Naive thymus-derived CD4-positive, alpha-beta T cell (primary cell): ENCODE measurements at regions of chr7 and their contacts with region 1.

Region 1: GRCh38 chr7:37385787-37386186 is 62.9 kb downstream of the ELMO1 start:
- DNase-seq: no peak
- ATAC-seq: peak; percentile 42
- H3K4me3 ChIP-seq: no peak overlapping the region
- H3K4me3 Mint-ChIP-seq: no peak overlapping the region
- H3K27ac ChIP-seq: no peak overlapping the region
- H3K27ac Mint-ChIP-seq: peak overlapping the region in 3 of 9 donors; percentile 5 to 77 (median 51)
- H3K4me1 ChIP-seq: no peaks in the 10 kb centered on the region
- H3K4me1 Mint-ChIP-seq: peaks cover 23 to 63% (median 35%) of the 10 kb centered on the region in 7 donors
- H3K27me3 ChIP-seq: no peaks in the 10 kb centered on the region
- H3K27me3 Mint-ChIP-seq: no peaks in the 10 kb centered on the region

Region 2: GRCh38 chr7:37369906-37370305 is 15.9 kb before region 1 on chr7:
- CTCF ChIA-PET with region 1: interaction called, 3 read pairs
- POLR2A ChIA-PET with region 1: no interaction called
- intact Hi-C with region 1: loop called in 1 of 2 experiments (anchors 2 kb)
- DNase-seq: no peak
- ATAC-seq: no peak
- H3K4me3 ChIP-seq: no peak overlapping the region
- H3K4me3 Mint-ChIP-seq: no peak overlapping the region
- H3K27ac ChIP-seq: no peak overlapping the region
- H3K27ac Mint-ChIP-seq: peak overlapping the region in 2 of 9 donors; percentile 13 to 59
- H3K4me1 ChIP-seq: peaks cover 12 to 17% of the 10 kb centered on the region in 2 donors
- H3K4me1 Mint-ChIP-seq: peaks cover 27 to 70% (median 51%) of the 10 kb centered on the region in 7 donors
- H3K27me3 ChIP-seq: no peaks in the 10 kb centered on the region
- H3K27me3 Mint-ChIP-seq: no peaks in the 10 kb centered on the region

Region 3: GRCh38 chr7:37399876-37400421 is 14.2 kb after region 1 on chr7:
- CTCF ChIA-PET with region 1: no interaction called
- POLR2A ChIA-PET with region 1: no interaction called
- intact Hi-C with region 1: loop called in 1 of 2 experiments (anchors 2 kb)
- DNase-seq: no peak
- ATAC-seq: no peak
- H3K4me3 ChIP-seq: no peak overlapping the region
- H3K4me3 Mint-ChIP-seq: no peak overlapping the region
- H3K27ac ChIP-seq: no peak overlapping the region
- H3K27ac Mint-ChIP-seq: peak overlapping the region in 1 of 9 donors; percentile 29
- H3K4me1 ChIP-seq: peaks cover 0 to 5% of the 10 kb centered on the region in 2 donors
- H3K4me1 Mint-ChIP-seq: peaks cover 22 to 86% (median 74%) of the 10 kb centered on the region in 7 donors
- H3K27me3 ChIP-seq: no peaks in the 10 kb centered on the region
- H3K27me3 Mint-ChIP-seq: no peaks in the 10 kb centered on the region

Region 4: GRCh38 chr7:37480041-37481031 is 94.5 kb after region 1 on chr7:
- CTCF ChIA-PET with region 1: no interaction called
- POLR2A ChIA-PET with region 1: no interaction called
- intact Hi-C with region 1: no loop called
- DNase-seq: no peak
- ATAC-seq: peak; percentile 48
- H3K4me3 ChIP-seq: no peak overlapping the region
- H3K4me3 Mint-ChIP-seq: no peak overlapping the region
- H3K27ac ChIP-seq: no peak overlapping the region
- H3K27ac Mint-ChIP-seq: no peak overlapping the region
- H3K4me1 ChIP-seq: no peaks in the 10 kb centered on the region
- H3K4me1 Mint-ChIP-seq: peaks cover 0 to 6% (median 0%) of the 10 kb centered on the region in 7 donors
- H3K27me3 ChIP-seq: no peaks in the 10 kb centered on the region
- H3K27me3 Mint-ChIP-seq: peaks cover 6 to 40% (median 10%) of the 10 kb centered on the region in 5 donors